ENCODE measurements at regions of chr5 and their contacts with region 1.

Region 1: GRCh38 chr5:150217873-150218692 is 28.2 kb downstream of the SLC6A7 start:
- DNase-seq: peak; percentile 77
- H3K4me3 ChIP-seq: no peak overlapping the region
- H3K27ac ChIP-seq: no peak overlapping the region
- H3K4me1 ChIP-seq: no peaks in the 10 kb centered on the region
- H3K27me3 ChIP-seq: peaks cover 0 to 8% of the 10 kb centered on the region in 2 experiments
- CTCF ChIP-seq: peak; percentile 81 to 87
- POLR2A ChIP-seq: no peak

Region 2: DNA sequence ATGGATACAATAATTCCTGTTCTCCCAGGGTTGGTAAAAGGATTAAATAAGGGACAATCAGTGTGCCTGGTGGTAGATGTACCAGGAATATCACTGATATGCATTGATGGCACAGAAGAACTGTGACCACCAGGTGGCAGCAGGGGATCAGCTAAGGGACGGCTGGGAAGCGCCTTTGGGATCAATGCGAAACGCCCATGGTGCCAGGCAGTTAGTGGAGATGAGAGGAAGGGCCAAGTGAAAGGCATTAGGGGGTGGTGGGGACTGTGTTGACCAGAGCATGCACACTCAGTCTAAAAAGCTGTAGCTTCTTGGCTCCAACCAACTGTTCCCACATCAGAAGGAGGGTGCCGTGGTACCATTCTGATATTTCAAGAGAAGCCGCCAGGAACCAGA is 581.2 kb before region 1 on chr5:
- CTCF ChIA-PET with region 1: interaction called, 3 read pairs
- POLR2A ChIA-PET with region 1: no interaction called
- dilution Hi-C with region 1: no loop called
- intact Hi-C with region 1: loop called (anchors 5 kb)
- DNase-seq: peak; percentile 57
- H3K4me3 ChIP-seq: no peak overlapping the region
- H3K27ac ChIP-seq: no peak overlapping the region
- H3K4me1 ChIP-seq: peaks cover 12% of the 10 kb centered on the region
- H3K27me3 ChIP-seq: no peaks in the 10 kb centered on the region
- CTCF ChIP-seq: peak; percentile 72 to 74
- POLR2A ChIP-seq: no peak

Region 3: GRCh38 chr5:149960272-149961185 is 257.6 kb before region 1 on chr5 and contains the start of gene SLC26A2:
- CTCF ChIA-PET with region 1: no interaction called
- POLR2A ChIA-PET with region 1: no interaction called
- dilution Hi-C with region 1: no loop called
- intact Hi-C with region 1: loop called (anchors 1 kb)
- DNase-seq: peak; percentile 98
- H3K4me3 ChIP-seq: peak within 1 kb of the TSS; percentile 71 to 76 (median 74)
- H3K27ac ChIP-seq: peak within 1 kb of the TSS; percentile 85
- H3K4me1 ChIP-seq: peaks cover 21% of the 10 kb centered on the region
- H3K27me3 ChIP-seq: no peaks in the 10 kb centered on the region
- CTCF ChIP-seq: no peak
- POLR2A ChIP-seq: peak; percentile 88
- total RNA-seq, gene SLC26A2: 16.5 and 16.8 TPM in 2 replicates

Region 4: GRCh38 chr5:150129813-150130492 is 88.1 kb before region 1 on chr5:
- CTCF ChIA-PET with region 1: interaction called, 36 read pairs
- POLR2A ChIA-PET with region 1: no interaction called
- dilution Hi-C with region 1: no loop called
- intact Hi-C with region 1: loop called (anchors 1 kb)
- DNase-seq: peak; percentile 65
- H3K4me3 ChIP-seq: no peak overlapping the region
- H3K27ac ChIP-seq: no peak overlapping the region
- H3K4me1 ChIP-seq: peaks cover 14% of the 10 kb centered on the region
- H3K27me3 ChIP-seq: peaks cover 0 to 5% of the 10 kb centered on the region in 2 experiments
- CTCF ChIP-seq: peak; percentile 89 to 93
- POLR2A ChIP-seq: no peak

Region 5: GRCh38 chr5:150161242-150162141 is 56.6 kb before region 1 on chr5:
- CTCF ChIA-PET with region 1: interaction called, 14 read pairs
- POLR2A ChIA-PET with region 1: no interaction called
- dilution Hi-C with region 1: no loop called
- intact Hi-C with region 1: loop called (anchors 1 kb)
- DNase-seq: peak; percentile 59
- H3K4me3 ChIP-seq: no peak overlapping the region
- H3K27ac ChIP-seq: no peak overlapping the region
- H3K4me1 ChIP-seq: no peaks in the 10 kb centered on the region
- H3K27me3 ChIP-seq: peaks cover 6 to 7% of the 10 kb centered on the region in 2 experiments
- CTCF ChIP-seq: peak; percentile 94 to 97
- POLR2A ChIP-seq: no peak

Region 6: GRCh38 chr5:150206098-150206778 is 11.8 kb before region 1 on chr5:
- CTCF ChIA-PET with region 1: interaction called, 17 read pairs
- POLR2A ChIA-PET with region 1: no interaction called
- dilution Hi-C with region 1: no loop called
- intact Hi-C with region 1: no loop called
- DNase-seq: no peak
- H3K4me3 ChIP-seq: no peak overlapping the region
- H3K27ac ChIP-seq: no peak overlapping the region
- H3K4me1 ChIP-seq: no peaks in the 10 kb centered on the region
- H3K27me3 ChIP-seq: peaks cover 0 to 9% of the 10 kb centered on the region in 2 experiments
- CTCF ChIP-seq: no peak
- POLR2A ChIP-seq: no peak

Region 7: DNA sequence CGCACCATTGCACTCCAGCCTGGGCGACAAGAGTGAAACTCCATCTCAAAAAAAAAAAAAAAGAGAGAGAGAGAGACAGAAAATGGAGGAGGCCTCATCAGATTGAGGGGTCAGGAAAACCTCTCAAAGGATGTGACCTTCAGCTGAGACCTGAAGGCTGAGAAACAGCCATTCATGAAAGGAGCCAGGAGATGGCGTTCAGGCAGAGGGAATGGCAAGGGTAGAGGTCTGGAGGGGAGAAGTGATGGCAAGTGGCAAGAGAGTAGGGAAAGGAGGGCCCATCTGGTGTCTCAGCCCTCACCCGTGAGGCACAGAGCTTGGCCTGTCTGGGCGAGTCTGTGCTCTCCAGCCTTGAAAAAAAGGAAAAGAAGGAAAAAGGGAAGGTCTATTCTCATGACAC is 54.4 kb after region 1 on chr5:
- CTCF ChIA-PET with region 1: no interaction called
- POLR2A ChIA-PET with region 1: no interaction called
- dilution Hi-C with region 1: no loop called
- intact Hi-C with region 1: no loop called
- DNase-seq: peak; percentile 18
- H3K4me3 ChIP-seq: no peak overlapping the region
- H3K27ac ChIP-seq: no peak overlapping the region
- H3K4me1 ChIP-seq: no peaks in the 10 kb centered on the region
- H3K27me3 ChIP-seq: peaks cover 9 to 19% of the 10 kb centered on the region in 2 experiments
- CTCF ChIP-seq: peak in 1 of 2 donors; percentile 42
- POLR2A ChIP-seq: no peak

Region 8: DNA sequence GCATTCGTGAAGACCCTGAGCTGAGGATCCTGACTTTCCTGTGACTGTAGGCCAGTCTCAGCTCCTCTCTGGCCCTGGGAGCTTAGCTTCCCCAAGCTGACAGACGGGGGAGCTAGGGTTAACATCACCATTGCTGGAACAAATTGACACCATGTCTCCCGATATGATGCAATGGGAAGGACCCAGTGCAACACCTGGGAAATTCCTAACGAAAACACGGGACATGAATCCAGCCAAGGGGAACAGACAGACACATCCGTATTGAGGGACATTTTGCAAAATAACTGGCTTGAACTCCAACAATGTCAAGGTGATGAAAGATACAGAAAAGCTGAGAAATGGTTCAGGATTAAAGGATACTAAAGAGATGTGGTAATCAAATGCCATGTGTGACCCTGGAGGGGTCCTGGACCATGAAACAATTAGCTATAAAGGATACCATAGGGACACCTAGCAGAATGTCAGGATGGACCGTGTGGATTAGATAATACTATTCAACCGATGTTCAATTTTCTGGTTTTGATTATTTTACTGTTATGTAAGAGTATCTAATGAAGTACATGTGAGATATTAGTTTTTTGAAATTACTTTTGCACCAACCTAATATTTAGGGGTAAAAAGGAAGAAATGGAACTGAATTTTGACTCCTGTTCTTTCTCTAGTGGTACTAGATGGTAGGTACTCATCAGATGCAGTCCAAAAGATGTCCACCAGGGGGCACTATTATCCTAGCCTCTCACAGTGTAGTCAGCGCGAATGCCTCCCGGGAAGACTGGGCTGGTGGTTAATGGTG is 342.5 kb after region 1 on chr5:
- CTCF ChIA-PET with region 1: no interaction called
- POLR2A ChIA-PET with region 1: no interaction called
- dilution Hi-C with region 1: no loop called
- intact Hi-C with region 1: no loop called
- DNase-seq: peak; percentile 79
- H3K4me3 ChIP-seq: no peak overlapping the region
- H3K27ac ChIP-seq: no peak overlapping the region
- H3K4me1 ChIP-seq: no peaks in the 10 kb centered on the region
- H3K27me3 ChIP-seq: no peaks in the 10 kb centered on the region
- CTCF ChIP-seq: peak; percentile 70 to 79
- POLR2A ChIP-seq: peak; percentile 26

Measured in endothelial cell of umbilical vein (primary cell).